ENCODE measurements at regions of chr12 and their contacts with region 1.

Region 1: GRCh38 chr12:71392521-71393145 is 47.0 kb upstream of the LGR5 start:
- DNase-seq: peak; percentile 65
- CTCF ChIP-seq: peak; percentile 63

Region 2: DNA sequence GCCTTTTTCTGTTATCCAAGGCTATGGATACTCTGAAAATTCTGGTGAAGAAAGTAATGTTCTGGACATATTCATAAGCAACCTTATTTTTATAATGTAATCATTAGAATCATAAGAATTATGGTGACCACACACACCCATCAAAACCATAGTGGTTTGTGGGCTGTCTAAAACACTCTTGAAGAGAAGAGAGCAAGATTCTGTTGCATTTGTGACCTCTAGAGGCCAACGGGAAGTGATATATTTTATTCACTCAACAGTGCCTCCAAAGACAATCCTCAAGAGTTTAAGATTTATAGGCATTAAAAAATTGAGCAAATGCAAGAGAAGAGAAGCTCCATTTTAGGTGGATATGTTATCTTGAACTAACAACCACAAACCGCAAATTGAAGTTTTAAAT is 21.5 kb before region 1 on chr12:
- CTCF ChIA-PET with region 1: interaction called, 10 read pairs
- POLR2A ChIA-PET with region 1: no interaction called
- DNase-seq: no peak
- CTCF ChIP-seq: no peak

Region 3: DNA sequence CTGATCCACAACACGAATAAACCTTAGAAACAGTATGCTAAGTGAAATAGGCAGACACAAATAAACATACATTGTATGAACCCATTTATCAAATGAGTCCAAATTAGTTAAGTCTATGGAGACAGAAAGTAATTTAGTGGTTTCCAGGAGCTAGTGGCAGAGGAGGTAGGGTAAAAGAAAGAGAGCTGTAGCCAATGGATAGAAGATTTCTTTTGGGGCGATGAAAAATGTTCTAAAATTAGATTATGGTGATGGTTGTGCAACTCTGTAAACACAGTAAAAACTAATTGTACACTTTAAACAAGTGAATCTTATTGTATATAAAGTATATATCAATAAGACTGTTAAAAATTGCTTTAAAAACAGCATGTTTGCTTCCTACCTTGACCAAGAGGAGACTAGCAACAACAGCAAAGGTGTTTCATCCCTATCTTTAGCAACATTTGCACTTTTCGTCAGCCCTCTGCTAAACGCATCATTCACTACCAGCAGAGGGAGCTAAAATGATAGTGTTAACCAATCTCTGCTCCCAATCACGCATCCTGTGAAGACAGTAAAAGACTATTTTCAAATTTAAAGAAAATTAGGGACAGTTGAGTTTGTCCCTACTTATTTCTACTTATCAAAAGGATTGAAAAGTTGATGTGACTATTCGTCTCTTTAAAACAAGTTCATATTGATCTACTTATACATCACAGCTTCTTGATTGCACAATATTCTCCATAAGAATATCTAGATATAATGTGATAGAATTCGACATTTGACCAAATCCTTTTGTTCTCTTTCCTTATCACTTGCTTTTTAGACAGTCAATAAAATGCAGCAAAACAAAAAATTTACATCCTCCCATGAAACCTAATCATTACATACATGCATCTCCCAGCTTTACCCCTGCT is 23.0 kb after region 1 on chr12:
- CTCF ChIA-PET with region 1: interaction called, 10 read pairs
- POLR2A ChIA-PET with region 1: no interaction called
- DNase-seq: peak; percentile 50
- CTCF ChIP-seq: peak; percentile 78

Measured in GM10248 (cell line).